ENCODE measurements at regions of chr2 and their contacts with region 1.

Region 1: GRCh38 chr2:177164584-177165052 is 48.0 kb upstream of the HNRNPA3 start:
- DNase-seq: peak; percentile 85
- ATAC-seq: peak; percentile 91

Region 2: DNA sequence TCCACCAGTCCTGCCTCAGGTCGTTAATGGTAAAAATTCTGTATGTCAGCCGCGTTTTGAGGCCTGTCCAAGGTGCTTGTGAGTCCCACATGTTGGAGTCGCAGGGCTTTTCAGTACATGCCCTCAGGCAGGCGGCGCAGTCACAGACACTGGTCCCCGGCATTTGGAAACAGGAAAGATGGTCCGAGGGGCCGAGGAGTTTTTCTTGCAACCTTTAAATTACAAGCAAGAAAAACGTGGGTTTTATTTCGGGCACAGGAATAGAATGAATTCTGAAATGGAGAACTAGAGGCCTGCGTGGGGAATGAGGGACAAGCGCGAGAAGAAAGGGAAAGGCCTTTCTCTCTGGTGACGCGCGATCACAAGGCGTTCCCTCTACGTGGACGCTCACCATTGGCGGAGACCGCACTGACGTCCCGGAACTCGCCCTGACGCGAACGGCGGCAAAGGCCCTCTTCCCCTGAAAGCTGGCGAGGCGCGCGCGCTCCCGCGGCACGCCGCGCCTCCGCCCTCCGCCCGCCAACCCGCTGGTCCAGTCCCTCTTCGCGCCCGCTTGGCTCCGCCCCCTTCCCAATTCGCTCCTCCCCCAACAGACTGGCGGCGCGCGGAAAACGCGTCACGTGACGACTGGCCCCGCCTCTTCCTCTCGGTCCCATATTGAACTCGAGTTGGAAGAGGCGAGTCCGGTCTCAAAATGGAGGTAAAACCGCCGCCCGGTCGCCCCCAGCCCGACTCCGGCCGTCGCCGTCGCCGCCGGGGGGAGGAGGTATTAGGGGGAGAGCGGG is 47.7 kb after region 1 on chr2 and contains the start of gene HNRNPA3:
- intact Hi-C with region 1: loop called (anchors 1 kb)
- DNase-seq: peak; percentile 99
- ATAC-seq: peak; percentile 96
- total RNA-seq, gene HNRNPA3: 66.6 TPM

Region 3: DNA sequence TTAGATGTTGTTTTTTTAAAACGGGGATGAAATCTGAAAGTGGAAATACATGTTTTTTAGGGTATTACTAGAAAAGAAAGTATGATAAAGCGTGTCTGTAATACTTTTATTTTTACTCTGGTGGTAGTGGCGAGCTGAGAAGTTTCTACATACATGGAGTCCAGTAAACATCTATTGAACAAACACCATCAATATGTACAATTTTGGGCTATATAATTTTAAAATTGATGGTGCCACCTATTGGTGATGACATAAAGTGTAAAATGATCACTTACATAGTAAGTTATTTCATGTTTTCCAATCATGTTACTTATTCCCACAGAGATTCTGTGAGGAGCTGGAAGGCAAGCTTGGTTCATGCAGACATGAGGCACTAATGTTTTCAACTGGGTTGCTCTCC is 131.4 kb after region 1 on chr2:
- intact Hi-C with region 1: loop called (anchors 1 kb)
- DNase-seq: no peak
- ATAC-seq: no peak

Region 4: DNA sequence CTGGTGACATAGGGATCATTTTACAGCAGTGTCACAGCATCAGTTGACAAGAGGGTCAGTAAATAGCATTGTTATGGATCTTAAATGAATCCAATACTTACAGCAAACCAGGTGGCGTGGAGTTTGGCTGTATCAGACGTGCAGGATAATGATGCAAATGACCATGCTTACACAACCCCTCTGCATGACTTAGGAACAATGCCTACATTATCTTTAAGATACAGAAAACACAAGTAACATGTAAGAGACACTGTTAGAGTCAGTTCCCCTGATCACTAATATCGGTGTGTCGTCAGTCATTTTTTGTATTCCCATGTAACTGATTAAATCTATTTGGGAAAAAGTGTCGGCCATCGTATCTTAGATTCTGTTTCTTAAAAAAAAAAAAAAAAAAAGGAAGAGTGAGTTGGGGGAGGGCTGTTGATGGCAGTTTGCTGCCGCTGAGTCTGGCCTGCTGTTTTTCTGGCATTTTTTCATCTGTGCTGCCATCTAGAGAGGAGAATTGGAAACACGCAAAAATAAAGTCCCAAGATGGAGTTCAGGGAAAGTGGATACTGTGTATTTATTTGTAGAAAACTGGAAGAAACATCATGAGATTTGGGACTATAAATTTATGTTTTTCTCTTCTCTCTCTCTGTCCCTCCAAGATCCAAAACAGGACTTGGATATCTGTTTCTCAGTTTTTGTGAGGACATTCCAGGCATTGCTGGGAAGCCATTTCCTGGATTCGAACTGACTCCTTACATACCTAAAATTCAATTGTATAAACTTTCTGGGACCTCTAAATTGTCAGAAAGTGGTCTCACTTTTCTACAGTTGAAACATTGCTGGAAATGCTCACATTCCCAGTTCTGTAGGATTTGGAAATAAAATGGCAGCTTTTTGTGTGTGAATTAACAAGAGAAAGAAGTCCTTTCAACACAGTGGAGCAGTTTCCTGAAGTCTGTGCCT is 167.7 kb after region 1 on chr2:
- intact Hi-C with region 1: loop called (anchors 1 kb)
- DNase-seq: no peak
- ATAC-seq: peak; percentile 86

Region 5: DNA sequence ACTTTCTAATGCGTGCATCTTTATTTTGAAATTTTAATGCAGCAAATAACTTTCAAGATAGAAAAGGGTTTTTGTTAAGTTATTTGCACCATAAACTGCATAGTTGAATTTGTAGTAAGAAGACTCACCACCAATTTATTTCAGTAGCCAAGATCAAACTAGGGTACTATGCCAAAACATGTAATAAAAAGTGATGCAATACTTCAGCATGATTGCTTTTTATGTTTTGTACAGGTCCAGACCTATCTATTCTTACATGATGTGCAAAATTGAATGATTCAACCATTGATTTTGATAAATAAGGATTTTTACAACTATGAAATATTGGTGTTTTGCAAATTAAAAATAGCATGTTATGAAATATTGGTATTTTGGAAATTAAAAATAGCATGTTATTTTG is 254.7 kb after region 1 on chr2:
- intact Hi-C with region 1: loop called (anchors 2 kb)
- DNase-seq: no peak
- ATAC-seq: no peak

Region 6: GRCh38 chr2:177604271-177605065 is 439.9 kb after region 1 on chr2:
- intact Hi-C with region 1: loop called (anchors 5 kb)
- DNase-seq: no peak
- ATAC-seq: peak; percentile 76

Region 7: DNA sequence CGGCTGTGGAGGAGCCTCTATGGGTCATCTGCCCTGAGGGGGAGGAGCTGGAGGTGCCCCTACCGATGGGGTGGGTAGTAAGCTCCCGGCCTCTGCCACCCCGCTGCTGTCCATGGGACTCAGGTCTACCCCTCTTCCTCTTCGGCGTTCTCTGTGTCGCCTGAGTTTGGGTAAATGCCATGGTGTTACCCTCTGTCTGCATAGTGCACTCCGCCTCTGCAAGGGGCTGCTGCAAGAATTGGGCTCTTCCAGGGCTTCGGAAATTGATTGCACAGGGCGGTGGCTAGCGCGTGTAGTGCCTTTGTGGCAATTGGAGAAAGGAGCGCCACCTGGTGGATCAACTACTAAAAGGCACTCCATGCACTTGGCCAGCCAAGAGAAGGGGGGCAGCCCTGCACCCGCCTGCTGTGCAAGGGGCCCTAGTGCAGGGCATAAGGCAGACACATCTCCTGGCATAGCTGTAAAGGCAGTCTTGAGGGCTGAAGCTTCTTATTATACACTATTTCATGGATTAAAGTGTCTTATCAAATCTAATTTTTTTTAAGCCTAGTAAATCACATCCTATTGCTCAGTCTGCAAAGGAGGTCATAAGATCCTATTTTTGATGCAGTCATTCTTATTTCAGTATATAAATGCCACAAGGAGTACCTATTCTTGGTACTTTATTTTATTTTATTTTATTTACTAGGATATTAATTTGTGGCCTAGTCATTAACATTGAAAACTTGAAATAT is 599.1 kb after region 1 on chr2:
- intact Hi-C with region 1: loop called (anchors 2 kb)
- DNase-seq: peak; percentile 77
- ATAC-seq: peak; percentile 86

Region 8: GRCh38 chr2:177799531-177799930 is 634.9 kb after region 1 on chr2:
- intact Hi-C with region 1: no loop called
- DNase-seq: no peak
- ATAC-seq: peak; percentile 34

Measured in Right ventricle myocardium inferior (tissue), 1 donor.